Colonic mucosa (tissue), 4 donors: ENCODE measurements at regions of chr10 and their contacts with region 1.

Region 1: DNA sequence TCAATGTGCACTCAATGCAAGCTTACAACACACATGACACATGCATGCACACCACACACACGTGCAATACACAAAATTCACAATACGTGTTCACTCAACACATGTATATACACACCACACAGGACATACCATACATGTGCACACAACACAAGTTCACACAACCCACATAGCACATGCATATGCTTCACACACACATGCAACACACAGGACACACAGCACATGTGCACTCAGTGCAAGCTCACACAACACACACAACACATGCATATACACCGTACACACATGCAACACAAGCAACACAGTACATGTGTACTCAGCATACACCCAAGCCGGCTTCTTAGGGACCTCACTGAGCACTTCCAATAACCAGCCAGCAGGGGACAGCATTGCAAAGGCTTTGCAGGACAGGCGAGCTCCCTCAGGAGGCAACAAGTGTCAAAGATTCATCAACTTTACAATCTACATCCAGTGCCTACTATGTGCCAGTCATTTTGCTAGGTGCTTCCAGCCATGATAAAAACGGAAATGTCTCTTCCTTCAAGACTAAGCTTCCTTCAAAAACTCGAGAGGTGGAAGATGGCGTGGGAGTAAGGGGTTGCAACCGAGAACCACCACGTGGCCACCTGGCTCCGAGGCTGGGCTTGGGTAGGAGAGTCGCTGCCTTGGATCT is 61.1 kb downstream of the JCAD start:
- DNase-seq: peak; percentile 76
- H3K4me3 ChIP-seq: no peak overlapping the region
- H3K27ac ChIP-seq: no peak overlapping the region
- H3K4me1 ChIP-seq: no peaks in the 10 kb centered on the region
- H3K27me3 ChIP-seq: no peaks in the 10 kb centered on the region
- CTCF ChIP-seq: peak; percentile 94

Region 2: GRCh38 chr10:30241422-30242110 is 243.3 kb after region 1 on chr10:
- intact Hi-C with region 1: loop called (anchors 2 kb)
- DNase-seq: no peak
- H3K4me3 ChIP-seq: no peak overlapping the region
- H3K27ac ChIP-seq: no peak overlapping the region
- H3K4me1 ChIP-seq: no peaks in the 10 kb centered on the region
- H3K27me3 ChIP-seq: no peaks in the 10 kb centered on the region
- CTCF ChIP-seq: no peak